Activated T-helper 1 cell treated with anti-CD3 and anti-CD28 coated beads, Interleukin-12 subunit alpha, Interleukin-12 subunit beta, Interleukin-2, Interleukin-4 antibody, amounts not matched to agents 30 ng/mL and 10 ng/mL and 1 ng/mL, durations not matched to agents 14 hours and 24 hours and 36 hours (primary cell): ENCODE measurements at regions of chr9 and their contacts with region 1.

Region 1: DNA sequence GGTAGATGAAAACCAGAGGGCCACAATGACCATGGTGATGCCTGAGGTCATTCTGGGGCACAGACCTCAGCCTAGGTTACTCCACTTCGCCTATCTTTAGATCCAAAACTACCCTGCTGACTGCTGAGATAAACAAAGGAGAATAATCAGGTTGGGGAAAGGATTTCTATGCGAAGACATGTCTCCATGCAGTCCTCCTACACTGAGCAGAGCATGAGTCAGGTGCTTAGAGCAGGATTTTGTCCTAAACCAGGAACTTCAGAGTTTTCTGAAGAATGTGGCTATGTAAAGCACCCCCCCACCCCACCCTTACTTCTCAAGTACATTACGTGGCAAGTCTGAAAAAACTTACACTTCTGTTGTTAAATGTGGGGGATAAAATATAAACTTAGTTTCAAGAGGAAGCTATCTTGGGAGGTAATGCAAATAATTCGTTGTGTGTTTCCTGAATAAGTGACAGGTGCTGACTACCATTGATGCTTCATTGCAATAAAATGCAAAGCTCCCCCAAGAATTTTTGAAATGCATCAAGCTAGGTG is 19.4 kb downstream of the PDCD1LG2 start:
- DNase-seq: no peak
- H3K4me3 Mint-ChIP-seq: no peak overlapping the region
- H3K27ac Mint-ChIP-seq: no peak overlapping the region
- H3K4me1 Mint-ChIP-seq: peaks cover 49% of the 10 kb centered on the region
- H3K27me3 Mint-ChIP-seq: no peaks in the 10 kb centered on the region

Region 2: DNA sequence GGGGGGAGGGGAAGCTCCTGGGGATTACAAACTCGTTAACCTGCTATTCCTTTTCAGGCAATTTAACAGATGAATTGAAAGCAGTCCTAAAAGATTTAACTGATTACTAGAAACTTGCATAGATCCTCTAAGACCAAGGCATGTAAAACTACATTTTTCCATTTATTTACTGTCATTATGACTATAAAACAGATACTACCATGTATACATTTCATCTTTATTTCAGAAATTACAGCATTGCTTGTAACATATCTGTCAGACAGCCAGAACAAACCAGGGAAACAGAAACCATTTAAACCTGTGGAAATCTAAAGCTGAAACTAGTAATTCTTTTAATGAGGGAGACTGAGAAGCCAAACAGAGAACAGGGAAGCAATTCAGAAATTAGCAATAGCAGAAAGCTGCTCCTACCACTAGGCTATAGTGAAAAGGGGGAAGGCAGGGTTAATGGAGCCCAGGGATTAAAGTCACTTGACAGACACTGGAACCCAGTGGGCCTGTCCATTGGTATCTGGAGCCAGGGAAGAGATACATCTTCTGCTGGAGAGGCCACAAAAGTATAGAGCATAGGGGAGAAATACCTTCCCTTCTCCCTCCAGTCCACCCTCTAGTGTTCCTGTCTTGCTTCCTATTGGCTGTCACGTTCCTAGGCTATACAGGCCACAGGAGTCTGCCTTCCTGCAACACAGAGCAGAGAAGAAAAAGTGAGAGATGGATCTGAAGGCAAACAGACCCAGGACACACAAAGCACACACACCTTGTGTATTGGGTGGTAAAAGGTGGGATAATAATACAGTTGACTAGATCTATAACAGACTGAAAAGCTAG is 14.3 kb after region 1 on chr9:
- intact Hi-C with region 1: loop called (anchors 2 kb)
- DNase-seq: no peak
- H3K4me3 Mint-ChIP-seq: no peak overlapping the region
- H3K27ac Mint-ChIP-seq: peak overlapping the region; percentile 22
- H3K4me1 Mint-ChIP-seq: peaks cover 42% of the 10 kb centered on the region
- H3K27me3 Mint-ChIP-seq: no peaks in the 10 kb centered on the region